Dorsolateral prefrontal cortex (tissue), 120 donors: ENCODE measurements at regions of chr6 and their contacts with region 1.

Region 1: GRCh38 chr6:5457041-5457440 is 195.7 kb downstream of the FARS2 start:
- DNase-seq: peak in 9 of 10 donors; percentile 5 to 78 (median 70)
- H3K4me3 ChIP-seq: peak overlapping the region in 1 of 59 donors; percentile 7
- H3K27ac ChIP-seq: peak overlapping the region in 43 of 59 donors; percentile 2 to 82 (median 56)
- H3K27me3 ChIP-seq: no peaks in the 10 kb centered on the region
- CTCF ChIP-seq: no peak

Region 2: GRCh38 chr6:5325173-5325572 is 131.9 kb before region 1 on chr6:
- intact Hi-C with region 1: loop called in 1 of 2 experiments (anchors 5 kb)
- DNase-seq: peak; percentile 22 to 83 (median 80)
- H3K4me3 ChIP-seq: peak overlapping the region in 4 of 59 donors; percentile 5 to 16 (median 8)
- H3K27ac ChIP-seq: peak overlapping the region in 30 of 59 donors; percentile 1 to 71 (median 33)
- H3K27me3 ChIP-seq: no peaks in the 10 kb centered on the region
- CTCF ChIP-seq: peak in 55 of 56 donors; percentile 17 to 82 (median 63)

Region 3: GRCh38 chr6:5645328-5646290 is 188.6 kb after region 1 on chr6:
- intact Hi-C with region 1: no loop called
- DNase-seq: peak in 1 of 10 donors; percentile 16
- H3K4me3 ChIP-seq: no peak overlapping the region
- H3K27ac ChIP-seq: peak overlapping the region in 5 of 59 donors; percentile 20 to 51 (median 24)
- H3K27me3 ChIP-seq: no peaks in the 10 kb centered on the region
- CTCF ChIP-seq: no peak